ENCODE measurements at regions of chr20 and their contacts with region 1.

Region 1: DNA sequence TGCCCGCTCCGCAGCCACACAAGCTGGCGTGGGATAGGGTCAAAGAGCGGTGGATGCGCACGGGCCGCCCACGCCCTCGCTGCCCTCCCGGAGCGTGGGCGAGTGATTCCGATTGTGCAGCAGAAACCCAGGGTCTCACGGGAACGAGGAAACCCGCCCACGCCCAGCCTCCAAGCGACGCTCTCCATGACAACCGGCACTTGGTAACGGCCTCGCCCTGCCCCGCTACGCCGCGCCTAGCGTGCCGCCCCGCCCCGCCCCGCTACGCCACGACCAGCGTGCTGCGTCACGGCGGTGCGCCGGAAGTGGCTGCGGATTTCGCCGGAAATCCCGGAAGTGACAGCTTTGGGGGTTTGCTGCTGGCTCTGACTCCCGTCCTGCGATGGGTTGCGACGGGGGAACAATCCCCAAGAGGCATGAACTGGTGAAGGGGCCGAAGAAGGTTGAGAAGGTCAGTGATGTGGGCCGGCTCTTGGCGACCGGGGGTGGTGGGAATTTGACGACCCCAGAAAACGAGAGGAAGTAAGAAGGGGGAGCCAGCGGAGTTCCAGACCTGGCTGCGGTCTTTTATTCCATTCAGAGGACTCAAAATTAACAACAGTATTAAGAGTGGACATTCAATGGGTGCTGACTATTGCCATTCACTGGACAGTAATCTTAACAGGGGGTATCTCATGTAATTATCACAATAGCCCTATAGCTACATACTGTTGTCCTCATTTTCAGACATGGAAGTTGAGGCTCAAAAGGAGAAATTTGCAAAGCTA is at the start of gene RTF2:
- DNase-seq: peak; percentile 95
- H3K4me3 ChIP-seq: peak within 1 kb of the TSS; percentile 64
- H3K27ac ChIP-seq: peak within 1 kb of the TSS; percentile 46
- H3K4me1 ChIP-seq: peaks cover 5% of the 10 kb centered on the region
- H3K27me3 ChIP-seq: no peaks in the 10 kb centered on the region
- CTCF ChIP-seq: no peak
- total RNA-seq, gene RTF2: 67.3 to 80.8 TPM

Region 2: GRCh38 chr20:56395166-56395565 is 73.3 kb before region 1 on chr20:
- intact Hi-C with region 1: loop called (anchors 5 kb)
- DNase-seq: no peak
- H3K4me3 ChIP-seq: no peak overlapping the region
- H3K27ac ChIP-seq: no peak overlapping the region
- H3K4me1 ChIP-seq: peaks cover 6% of the 10 kb centered on the region
- H3K27me3 ChIP-seq: no peaks in the 10 kb centered on the region
- CTCF ChIP-seq: no peak

Measured in colonic mucosa (tissue), 4 donors.